A549 (cell line): ENCODE measurements at regions of chr7 and their contacts with region 1.

Region 1: GRCh38 chr7:92621026-92621540 is 30.9 kb upstream of the FAM133B start:
- DNase-seq: peak; percentile 36 to 85
- ATAC-seq: peak; percentile 87 to 92
- H3K4me3 ChIP-seq: no peak overlapping the region
- H3K27ac ChIP-seq: peak overlapping the region; percentile 50 to 78
- H3K4me1 ChIP-seq: peaks cover 28% of the 10 kb centered on the region
- CTCF ChIP-seq: peak; percentile 84
- EP300 ChIP-seq: no peak
- POLR2A ChIP-seq: no peak
- RAD21 ChIP-seq: peak; percentile 94 to 95

Region 2: DNA sequence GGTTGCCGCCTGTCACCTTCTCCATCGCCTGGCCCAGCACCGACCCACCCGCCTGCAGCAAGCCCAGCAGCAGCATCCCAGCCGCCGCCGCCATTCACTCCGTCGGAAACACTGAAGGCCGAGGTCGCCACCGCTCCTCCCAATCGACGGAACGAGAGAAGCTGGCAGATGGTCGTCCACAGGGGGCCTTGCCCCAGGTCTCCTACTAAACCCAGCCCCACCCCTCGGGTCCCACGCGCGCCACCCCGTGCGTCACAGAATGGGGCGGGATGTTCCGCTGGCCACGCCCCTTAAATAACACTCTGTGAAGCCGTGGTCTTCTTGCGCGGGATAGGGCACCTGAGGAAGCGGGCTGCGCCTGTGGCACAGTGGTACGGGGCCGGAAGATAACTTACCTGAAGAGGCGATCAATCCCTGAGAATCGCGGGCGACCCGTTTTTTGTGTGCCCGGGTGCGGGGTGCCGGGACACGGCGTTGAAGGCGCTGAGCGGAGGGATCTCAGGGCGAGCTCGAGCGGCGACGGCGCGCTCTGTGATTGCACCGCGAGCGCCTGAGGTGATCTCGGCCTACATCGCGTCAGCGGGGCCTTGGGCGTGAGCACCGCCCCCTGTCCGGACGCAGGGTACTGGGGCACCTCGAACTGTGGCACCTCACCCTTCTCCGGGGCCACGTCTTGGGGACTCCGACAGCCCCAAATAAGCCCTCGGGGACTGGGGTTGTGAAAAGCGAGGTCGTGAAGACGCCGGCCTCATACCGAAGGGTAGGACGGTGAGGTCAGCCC is 486.6 kb before region 1 on chr7 and contains the start of gene CYP51A1:
- CTCF ChIA-PET with region 1: no interaction called
- POLR2A ChIA-PET with region 1: no interaction called
- DNase-seq: peak; percentile 89 to 95
- ATAC-seq: peak; percentile 93 to 94
- H3K4me3 ChIP-seq: peak within 1 kb of the TSS; percentile 92
- H3K27ac ChIP-seq: peak within 1 kb of the TSS; percentile 96 to 98
- H3K4me1 ChIP-seq: peaks cover 13% of the 10 kb centered on the region; the same call in 2 of the 3 replicates
- CTCF ChIP-seq: no peak
- EP300 ChIP-seq: no peak
- POLR2A ChIP-seq: peak; percentile 74
- RAD21 ChIP-seq: no peak
- polyA plus RNA-seq, gene CYP51A1: 12.6 and 18.1 TPM in 2 replicates

Region 3: GRCh38 chr7:92576296-92576695 is 44.8 kb before region 1 on chr7:
- CTCF ChIA-PET with region 1: no interaction called
- POLR2A ChIA-PET with region 1: no interaction called
- DNase-seq: no peak
- ATAC-seq: no peak
- H3K4me3 ChIP-seq: no peak overlapping the region
- H3K27ac ChIP-seq: no peak overlapping the region
- H3K4me1 ChIP-seq: no peaks in the 10 kb centered on the region
- CTCF ChIP-seq: no peak
- EP300 ChIP-seq: no peak
- POLR2A ChIP-seq: no peak
- RAD21 ChIP-seq: no peak

Region 4: DNA sequence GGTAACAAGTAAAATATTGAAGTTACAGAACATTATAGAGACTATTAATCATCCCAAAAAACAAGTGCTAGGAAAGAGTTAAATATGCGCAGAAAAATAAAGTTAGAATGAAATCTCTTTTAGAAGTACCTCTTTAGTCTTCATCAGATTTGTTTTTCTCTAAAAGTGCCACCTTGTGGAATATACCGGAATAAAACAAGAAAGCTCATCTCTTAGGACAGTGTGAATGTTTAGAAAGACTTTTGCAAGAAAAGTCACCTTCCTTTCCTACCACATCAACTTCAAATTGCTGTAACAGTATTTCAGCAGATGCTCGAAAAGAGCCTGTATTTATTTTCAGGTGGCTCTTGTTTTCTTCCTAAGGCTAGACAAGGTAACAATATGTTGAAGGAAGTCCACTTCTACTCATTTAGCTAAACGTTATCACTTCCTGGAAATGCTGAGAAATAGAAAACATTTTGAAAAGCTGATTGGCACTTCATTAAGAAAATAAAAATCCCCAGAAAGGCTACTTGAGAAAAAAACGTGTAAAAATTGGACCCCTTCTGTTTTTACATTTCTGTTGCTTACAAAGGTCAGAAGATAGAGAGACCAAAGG is 11.1 kb before region 1 on chr7:
- CTCF ChIA-PET with region 1: interaction called, 26 read pairs
- POLR2A ChIA-PET with region 1: no interaction called
- DNase-seq: peak in 1 of 2 experiments; percentile 43
- ATAC-seq: peak; percentile 66 to 84; a peak in 4 of 6 replicates
- H3K4me3 ChIP-seq: no peak overlapping the region
- H3K27ac ChIP-seq: no peak overlapping the region
- H3K4me1 ChIP-seq: no peaks in the 10 kb centered on the region
- CTCF ChIP-seq: peak; percentile 52; the same call in 2 of the 3 replicates
- EP300 ChIP-seq: no peak
- POLR2A ChIP-seq: no peak
- RAD21 ChIP-seq: peak in 1 of 2 experiments; percentile 31; a peak in 2 of 5 replicates

Region 5: DNA sequence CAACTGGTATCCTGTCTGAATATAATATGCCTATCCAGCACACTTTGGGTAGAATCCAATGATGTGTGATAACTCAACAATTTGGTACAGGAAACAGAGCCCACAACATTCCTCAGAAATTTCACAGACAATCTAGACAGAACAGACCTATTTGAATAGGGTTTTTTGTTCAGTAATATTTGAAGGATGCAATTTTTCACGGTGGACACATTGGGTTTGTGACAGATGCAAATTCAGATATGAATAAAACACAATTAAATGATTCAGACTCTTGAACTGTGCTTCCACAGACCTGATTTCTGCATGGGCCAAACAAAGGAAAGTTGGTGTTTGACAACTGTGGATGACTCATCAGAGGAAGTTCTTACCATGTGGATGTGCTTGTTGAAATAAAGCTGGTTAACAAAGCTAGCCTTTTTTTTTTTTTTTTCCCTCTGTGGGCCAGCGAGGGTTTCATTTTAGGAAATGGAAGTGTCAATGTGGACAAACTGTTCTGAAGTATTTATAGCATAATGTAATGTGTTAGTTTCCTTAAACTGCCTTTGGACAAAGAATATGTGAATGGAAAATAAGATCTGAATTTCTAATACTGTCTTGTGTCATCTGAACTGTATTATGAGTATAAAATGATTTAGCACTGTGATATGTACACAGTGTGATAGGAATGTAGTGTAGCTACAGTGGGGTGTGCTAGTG is 12.3 kb after region 1 on chr7:
- CTCF ChIA-PET with region 1: interaction called, 23 read pairs
- POLR2A ChIA-PET with region 1: no interaction called
- DNase-seq: peak; percentile 30 to 79
- ATAC-seq: peak; percentile 78 to 85
- H3K4me3 ChIP-seq: 0 out of 3 replicates have a peak overlapping the region, but pooled peaks have one; percentile 6
- H3K27ac ChIP-seq: peak overlapping the region; percentile 59 to 63
- H3K4me1 ChIP-seq: peaks cover 46% of the 10 kb centered on the region
- CTCF ChIP-seq: no peak
- EP300 ChIP-seq: no peak
- POLR2A ChIP-seq: no peak
- RAD21 ChIP-seq: 0 out of 5 replicates have a peak, but pooled peaks of 1 of the 2 experiments have one; percentile 13

Region 6: DNA sequence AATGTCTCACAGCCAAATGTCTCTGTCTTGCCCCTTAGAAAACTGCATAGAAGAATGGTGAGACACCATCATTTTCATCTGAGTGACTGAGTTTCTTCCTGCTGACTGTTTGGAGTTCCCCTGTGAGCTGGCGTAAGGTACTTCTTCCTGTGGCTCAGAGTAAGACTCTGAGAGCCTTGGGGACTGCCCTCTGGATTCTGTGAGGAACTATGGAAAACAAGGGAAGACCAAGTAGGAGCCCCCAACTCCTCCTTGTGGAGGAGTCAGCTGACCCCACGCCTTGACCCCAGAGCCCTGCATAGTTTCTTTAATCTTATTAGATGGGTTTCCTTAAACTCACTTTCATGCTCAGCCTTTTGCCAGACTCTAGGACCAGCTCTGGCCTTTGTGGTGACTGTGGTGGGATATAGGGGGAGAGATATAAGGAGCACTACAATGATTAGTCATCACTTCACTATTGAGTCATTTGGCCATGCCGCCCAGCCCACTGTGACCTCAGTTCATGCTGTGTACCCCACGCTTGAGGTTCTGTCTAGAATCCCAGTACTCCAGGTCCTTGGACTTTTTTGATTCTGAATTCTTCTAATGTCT is 20.9 kb after region 1 on chr7:
- CTCF ChIA-PET with region 1: interaction called, 22 read pairs
- POLR2A ChIA-PET with region 1: no interaction called
- DNase-seq: peak in 1 of 2 experiments; percentile 43
- ATAC-seq: peak in 1 of 2 experiments; percentile 41; a peak in 3 of 6 replicates
- H3K4me3 ChIP-seq: no peak overlapping the region
- H3K27ac ChIP-seq: peak overlapping the region; percentile 52 to 90; a peak in 5 of 6 replicates
- H3K4me1 ChIP-seq: peaks cover 51% of the 10 kb centered on the region
- CTCF ChIP-seq: no peak
- EP300 ChIP-seq: no peak
- POLR2A ChIP-seq: no peak
- RAD21 ChIP-seq: no peak

Region 7: GRCh38 chr7:92667816-92668535 is 46.9 kb after region 1 on chr7:
- CTCF ChIA-PET with region 1: no interaction called
- POLR2A ChIA-PET with region 1: no interaction called
- DNase-seq: no peak
- ATAC-seq: no peak
- H3K4me3 ChIP-seq: no peak overlapping the region
- H3K27ac ChIP-seq: 0 out of 6 replicates have a peak overlapping the region, but pooled peaks of 1 of the 2 experiments have one; percentile 12
- H3K4me1 ChIP-seq: 0 out of 3 replicates have a peak, but pooled peaks cover 9% of the 10 kb centered on the region
- CTCF ChIP-seq: no peak
- EP300 ChIP-seq: no peak
- POLR2A ChIP-seq: no peak
- RAD21 ChIP-seq: no peak

Region 8: DNA sequence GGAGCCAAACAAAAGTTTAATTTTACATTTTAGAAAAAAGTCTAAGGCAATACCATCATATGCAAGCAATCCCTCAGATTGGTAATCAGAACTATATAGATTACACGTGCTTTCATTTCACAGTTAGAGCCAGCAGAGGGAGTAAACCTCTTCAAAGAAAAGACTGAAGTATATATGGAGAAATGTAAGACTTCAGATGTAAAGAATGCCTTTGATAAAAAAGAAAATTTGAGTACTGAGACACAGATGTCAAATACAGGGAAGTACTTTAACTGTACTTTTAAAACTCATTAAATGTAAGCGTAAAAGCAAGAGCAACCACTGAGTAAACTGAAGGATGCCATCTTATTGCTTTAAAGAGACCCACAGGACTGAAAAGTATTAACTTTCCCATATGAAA is 70.5 kb after region 1 on chr7:
- CTCF ChIA-PET with region 1: interaction called, 13 read pairs
- POLR2A ChIA-PET with region 1: interaction called, 3 read pairs
- DNase-seq: peak; percentile 38 to 69
- ATAC-seq: peak; percentile 60 to 74; a peak in 4 of 6 replicates
- H3K4me3 ChIP-seq: no peak overlapping the region
- H3K27ac ChIP-seq: peak overlapping the region; percentile 54 to 78
- H3K4me1 ChIP-seq: peaks cover 32% of the 10 kb centered on the region
- CTCF ChIP-seq: peak; percentile 72
- EP300 ChIP-seq: no peak
- POLR2A ChIP-seq: no peak
- RAD21 ChIP-seq: peak; percentile 77 to 81